ENCODE measurements at regions of chr10 and their contacts with region 1.

Region 1: DNA sequence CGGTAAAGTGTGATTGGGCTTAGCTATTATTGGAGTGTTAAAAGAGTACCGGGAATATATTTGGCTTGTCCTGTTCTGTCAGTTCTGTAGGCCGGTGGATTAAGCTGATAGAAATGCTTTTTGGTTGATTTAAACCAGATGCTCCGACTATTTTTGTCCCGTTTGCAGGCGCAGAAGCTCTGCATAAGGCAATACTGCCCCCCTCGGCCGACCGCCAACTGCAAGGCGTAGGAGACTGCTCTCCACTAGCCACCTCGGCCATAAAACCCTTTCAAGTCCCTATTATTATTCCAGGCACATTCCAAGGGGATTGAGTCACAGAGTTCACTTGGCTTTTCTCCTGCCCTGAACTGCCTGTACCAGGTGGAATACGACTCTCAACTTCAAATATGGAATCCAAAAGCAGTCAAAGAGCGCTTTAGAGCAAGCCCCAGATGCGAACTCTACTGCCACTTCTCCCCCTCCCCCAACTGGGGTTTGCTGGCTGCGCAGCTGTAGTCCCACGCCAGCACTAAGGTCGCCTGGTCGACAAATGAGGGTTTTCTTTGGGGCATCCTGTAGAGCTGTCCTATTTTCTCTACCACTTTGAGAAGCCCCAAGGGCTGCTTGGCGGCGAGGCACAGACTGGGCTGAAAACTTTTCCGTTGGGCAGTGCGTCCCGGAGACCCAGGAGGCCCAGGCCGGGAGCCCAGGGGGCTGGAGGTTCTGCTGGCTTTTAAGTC is 108.3 kb downstream of the REEP3 start:
- DNase-seq: peak; percentile 53 to 95 (median 72)
- ATAC-seq: peak; percentile 86
- H3K4me3 ChIP-seq: peak overlapping the region; percentile 60
- H3K27ac ChIP-seq: peak overlapping the region; percentile 73
- H3K4me1 ChIP-seq: peaks cover 19 to 20% of the 10 kb centered on the region in 2 experiments; a peak in 4 of 5 replicates
- H3K27me3 ChIP-seq: no peaks in the 10 kb centered on the region
- CTCF ChIP-seq: peak; percentile 91 to 97 (median 97)
- EP300 ChIP-seq: no peak
- POLR2A ChIP-seq: no peak
- RAD21 ChIP-seq: peak; percentile 88 to 91

Region 2: DNA sequence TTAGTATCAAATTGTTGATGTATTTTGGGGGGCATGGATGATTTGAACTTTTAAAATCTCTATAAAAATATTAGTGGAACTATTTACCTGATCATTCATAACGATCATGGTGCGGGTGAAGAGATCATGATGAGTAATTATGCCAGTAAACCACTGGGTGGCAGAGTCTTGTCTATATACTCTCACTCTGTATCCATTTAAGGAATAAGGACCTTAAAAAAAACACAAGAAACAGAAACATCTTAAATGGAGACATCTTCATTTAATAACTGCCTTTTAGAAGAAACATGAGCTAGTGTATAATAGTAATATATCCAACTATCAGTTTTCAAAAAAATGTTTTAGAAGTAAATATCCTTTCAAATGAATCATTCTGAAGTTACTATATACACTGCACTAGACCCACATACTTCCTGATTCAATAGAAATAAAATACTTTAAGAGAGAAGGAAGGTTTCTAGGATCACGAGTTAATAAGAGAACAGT is 412.4 kb before region 1 on chr10:
- CTCF ChIA-PET with region 1: interaction called, 17 read pairs
- POLR2A ChIA-PET with region 1: interaction called, 3 read pairs
- in situ Hi-C with region 1: loop called (anchors 25 kb)
- intact Hi-C with region 1: loop called (anchors 1 kb)
- DNase-seq: peak in 2 of 4 experiments; percentile 39 to 61
- ATAC-seq: peak; percentile 79
- H3K4me3 ChIP-seq: no peak overlapping the region
- H3K27ac ChIP-seq: no peak overlapping the region
- H3K4me1 ChIP-seq: no peaks in the 10 kb centered on the region
- H3K27me3 ChIP-seq: no peaks in the 10 kb centered on the region
- CTCF ChIP-seq: peak; percentile 38 to 77 (median 47); a peak in 3 of 6 replicates
- EP300 ChIP-seq: no peak
- POLR2A ChIP-seq: no peak
- RAD21 ChIP-seq: peak; percentile 87 to 90

Region 3: GRCh38 chr10:63421591-63421990 is 207.9 kb before region 1 on chr10:
- CTCF ChIA-PET with region 1: no interaction called
- POLR2A ChIA-PET with region 1: no interaction called
- in situ Hi-C with region 1: no loop called
- intact Hi-C with region 1: loop called (anchors 5 kb)
- DNase-seq: no peak
- ATAC-seq: peak; percentile 74
- H3K4me3 ChIP-seq: no peak overlapping the region
- H3K27ac ChIP-seq: peak overlapping the region; percentile 58; the same call in 1 of the 3 replicates
- H3K4me1 ChIP-seq: peaks cover 0 to 18% of the 10 kb centered on the region in 2 experiments; a peak in 3 of 5 replicates
- H3K27me3 ChIP-seq: no peaks in the 10 kb centered on the region
- CTCF ChIP-seq: no peak
- EP300 ChIP-seq: no peak; the same call in 1 of the 2 replicates
- POLR2A ChIP-seq: no peak
- RAD21 ChIP-seq: no peak

Region 4: DNA sequence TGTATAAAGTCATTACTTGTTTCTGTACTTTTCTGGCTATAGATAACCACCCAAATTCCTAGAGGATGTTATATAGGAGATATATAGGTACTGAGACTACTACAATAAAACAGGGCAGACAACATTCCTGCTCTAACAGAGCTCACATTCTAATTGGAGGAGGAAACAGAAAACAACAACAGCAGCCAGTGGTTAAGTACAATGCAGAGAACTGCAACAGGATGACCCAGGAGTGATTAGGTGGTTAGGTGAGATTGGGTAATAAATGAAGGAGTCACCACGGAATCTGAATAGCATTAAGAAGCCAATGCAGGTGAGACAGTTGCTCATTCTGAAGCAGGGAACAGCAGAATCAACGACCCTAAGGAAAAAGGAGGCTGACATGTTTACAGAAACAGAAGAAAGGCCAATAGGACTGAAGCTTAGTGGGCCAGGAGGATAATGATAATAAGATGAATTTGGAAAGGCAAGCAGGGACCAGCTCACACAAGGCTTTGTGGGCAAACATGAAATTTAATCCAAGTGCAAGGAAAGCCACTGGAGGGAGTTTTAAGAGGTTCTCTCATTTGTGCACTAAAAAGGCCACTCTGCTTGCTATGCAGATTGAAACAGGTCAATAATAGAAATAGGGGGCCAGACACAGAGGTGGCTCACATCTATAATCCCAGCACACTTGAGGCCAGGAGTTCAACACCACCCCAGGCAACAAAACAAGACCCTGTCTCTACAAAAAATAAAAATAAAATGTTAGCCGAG is 125.2 kb before region 1 on chr10:
- CTCF ChIA-PET with region 1: no interaction called
- POLR2A ChIA-PET with region 1: interaction called, 3 read pairs
- in situ Hi-C with region 1: no loop called
- intact Hi-C with region 1: loop called (anchors 5 kb)
- DNase-seq: peak in 1 of 4 experiments; percentile 39
- ATAC-seq: peak; percentile 65
- H3K4me3 ChIP-seq: no peak overlapping the region
- H3K27ac ChIP-seq: peak overlapping the region; percentile 63
- H3K4me1 ChIP-seq: peaks cover 5 to 22% of the 10 kb centered on the region in 2 experiments; a peak in 4 of 5 replicates
- H3K27me3 ChIP-seq: no peaks in the 10 kb centered on the region
- CTCF ChIP-seq: peak in 1 of 3 experiments; percentile 23; a peak in 1 of 6 replicates
- EP300 ChIP-seq: no peak
- POLR2A ChIP-seq: no peak
- RAD21 ChIP-seq: no peak

Region 5: GRCh38 chr10:63614371-63614891 is 15.1 kb before region 1 on chr10:
- CTCF ChIA-PET with region 1: no interaction called
- POLR2A ChIA-PET with region 1: interaction called, 18 read pairs
- in situ Hi-C with region 1: no loop called
- intact Hi-C with region 1: no loop called
- DNase-seq: no peak
- ATAC-seq: peak; percentile 61
- H3K4me3 ChIP-seq: no peak overlapping the region
- H3K27ac ChIP-seq: no peak overlapping the region
- H3K4me1 ChIP-seq: no peaks in the 10 kb centered on the region
- H3K27me3 ChIP-seq: no peaks in the 10 kb centered on the region
- CTCF ChIP-seq: no peak
- EP300 ChIP-seq: no peak
- POLR2A ChIP-seq: no peak
- RAD21 ChIP-seq: no peak

Measured in K562 (cell line).